HepG2 (cell line): ENCODE measurements at regions of chr2 and their contacts with region 1.

Region 1: DNA sequence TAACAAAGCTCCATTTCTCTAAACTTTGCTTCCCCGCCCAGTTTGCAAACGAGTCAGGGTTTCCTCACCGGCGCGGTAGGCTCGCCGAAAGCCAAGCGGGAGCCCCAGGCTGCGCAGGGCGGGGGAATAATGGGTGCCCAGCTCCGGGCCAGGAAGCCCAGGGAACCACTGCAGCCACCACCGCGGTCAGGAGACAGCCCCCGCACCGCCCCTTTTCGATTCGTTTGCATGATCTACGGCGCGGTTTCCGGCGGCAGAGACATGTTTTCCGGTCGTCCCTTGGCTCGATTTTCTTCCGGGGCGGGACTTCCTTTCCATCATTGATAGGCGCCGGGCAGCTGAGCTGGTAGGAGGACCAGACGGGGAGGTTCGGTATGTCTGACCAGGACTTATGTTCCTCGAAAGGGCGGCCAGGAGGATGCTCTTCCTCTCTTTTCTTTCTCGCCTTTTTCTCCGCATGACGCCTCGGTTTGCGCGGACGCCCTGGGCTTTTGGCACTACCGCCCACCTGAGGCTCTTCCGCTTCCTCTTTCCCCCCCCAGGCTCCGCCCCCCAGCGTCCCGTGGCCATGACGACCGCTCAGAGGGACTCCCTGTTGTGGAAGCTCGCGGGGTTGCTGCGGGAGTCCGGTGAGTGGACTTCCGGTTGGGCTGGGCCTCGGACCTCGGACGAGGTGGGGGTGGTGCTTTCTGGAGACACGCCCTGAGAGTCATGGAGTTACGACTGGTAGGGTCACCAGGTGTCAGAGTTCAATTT is at the start of gene STK11IP:
- DNase-seq: peak; percentile 99
- ATAC-seq: peak; percentile 96
- H3K4me3 ChIP-seq: peak within 1 kb of the TSS; percentile 72 to 91 (median 81)
- H3K27ac ChIP-seq: peak within 1 kb of the TSS; percentile 95
- H3K4me1 ChIP-seq: peaks cover 53% of the 10 kb centered on the region
- H3K27me3 ChIP-seq: no peaks in the 10 kb centered on the region; a peak in 1 of 5 replicates
- CTCF ChIP-seq: peak; percentile 27
- EP300 ChIP-seq: peak; percentile 16 to 61; a peak in 2 of 4 replicates
- POLR2A ChIP-seq: peak; percentile 89 to 96
- RAD21 ChIP-seq: peak; percentile 47; the same call in 1 of the 2 replicates
- total RNA-seq, gene STK11IP: 5.6 and 12.8 TPM in 2 replicates

Region 2: DNA sequence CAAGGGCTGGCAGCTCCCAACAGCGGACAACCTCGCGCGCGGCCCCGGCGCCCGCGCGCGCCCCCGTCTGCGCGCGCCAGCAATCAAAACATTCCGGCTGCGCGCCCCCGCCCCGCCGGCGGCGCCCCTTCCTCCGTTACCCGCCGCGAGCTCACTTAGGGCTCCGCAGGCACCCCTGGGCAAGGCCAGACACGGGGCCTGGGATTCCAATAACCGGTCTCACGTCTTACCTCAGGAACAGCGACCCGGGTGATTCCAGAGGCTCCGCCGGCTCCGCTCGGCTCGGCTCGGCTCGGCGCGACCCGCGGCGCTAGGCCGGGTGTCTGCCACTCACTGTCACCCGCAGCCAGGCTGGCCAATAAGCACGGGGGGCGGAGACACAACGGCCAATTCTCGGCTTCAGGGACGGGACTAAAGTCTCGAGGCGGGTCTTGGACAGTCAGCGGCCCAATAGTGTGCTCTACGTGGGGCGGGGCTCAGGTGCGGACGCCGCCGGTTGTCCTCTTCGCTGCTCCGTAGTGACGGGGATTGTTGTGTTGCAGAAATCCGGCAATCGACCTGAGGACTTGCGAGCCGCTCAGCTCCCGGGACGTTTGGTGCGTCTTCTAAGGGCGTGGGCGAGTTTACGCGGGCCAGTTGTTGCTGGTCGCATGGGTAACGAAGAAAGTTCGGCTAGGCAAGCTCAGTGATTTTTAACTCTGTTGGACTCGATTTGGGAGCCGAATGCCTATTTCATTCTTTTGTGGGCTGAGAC is 368.2 kb before region 1 on chr2 and contains the starts of genes ANKZF1 and ATG9A:
- CTCF ChIA-PET with region 1: no interaction called
- POLR2A ChIA-PET with region 1: no interaction called
- in situ Hi-C with region 1: no loop called
- intact Hi-C with region 1: no loop called
- DNase-seq: peak; percentile 99
- ATAC-seq: peak; percentile 94
- H3K4me3 ChIP-seq: peak within 1 kb of the TSS; percentile 91 to 93 (median 93)
- H3K27ac ChIP-seq: peak within 1 kb of the TSS; percentile 81
- H3K4me1 ChIP-seq: peaks cover 39% of the 10 kb centered on the region
- H3K27me3 ChIP-seq: no peaks in the 10 kb centered on the region; a peak in 1 of 5 replicates
- CTCF ChIP-seq: peak; percentile 9; the same call in 1 of the 2 replicates
- EP300 ChIP-seq: peak; percentile 20 to 21; a peak in 3 of 4 replicates
- POLR2A ChIP-seq: peak; percentile 85 to 92
- RAD21 ChIP-seq: peak; percentile 73
- total RNA-seq, gene ANKZF1: 14.6 and 25.3 TPM in 2 replicates
- total RNA-seq, gene ATG9A: 22.2 and 35.0 TPM in 2 replicates

Region 3: GRCh38 chr2:219498280-219499057 is 99.3 kb before region 1 on chr2 and contains the start of gene GMPPA:
- CTCF ChIA-PET with region 1: no interaction called
- POLR2A ChIA-PET with region 1: interaction called, 22 read pairs
- in situ Hi-C with region 1: no loop called
- intact Hi-C with region 1: loop called (anchors 5 kb)
- DNase-seq: peak; percentile 99
- ATAC-seq: peak; percentile 82
- H3K4me3 ChIP-seq: peak within 1 kb of the TSS; percentile 79 to 93 (median 89)
- H3K27ac ChIP-seq: peak within 1 kb of the TSS; percentile 70
- H3K4me1 ChIP-seq: peaks cover 56% of the 10 kb centered on the region
- H3K27me3 ChIP-seq: peaks cover 6 to 40% of the 10 kb centered on the region in 2 experiments; a peak in 4 of 5 replicates
- CTCF ChIP-seq: peak; percentile 36
- EP300 ChIP-seq: peak in 1 of 2 experiments; percentile 7; a peak in 2 of 4 replicates
- POLR2A ChIP-seq: peak in 1 of 2 experiments; percentile 84; a peak in 2 of 4 replicates
- RAD21 ChIP-seq: no peak
- total RNA-seq, gene GMPPA: 81.1 and 88.7 TPM in 2 replicates

Region 4: DNA sequence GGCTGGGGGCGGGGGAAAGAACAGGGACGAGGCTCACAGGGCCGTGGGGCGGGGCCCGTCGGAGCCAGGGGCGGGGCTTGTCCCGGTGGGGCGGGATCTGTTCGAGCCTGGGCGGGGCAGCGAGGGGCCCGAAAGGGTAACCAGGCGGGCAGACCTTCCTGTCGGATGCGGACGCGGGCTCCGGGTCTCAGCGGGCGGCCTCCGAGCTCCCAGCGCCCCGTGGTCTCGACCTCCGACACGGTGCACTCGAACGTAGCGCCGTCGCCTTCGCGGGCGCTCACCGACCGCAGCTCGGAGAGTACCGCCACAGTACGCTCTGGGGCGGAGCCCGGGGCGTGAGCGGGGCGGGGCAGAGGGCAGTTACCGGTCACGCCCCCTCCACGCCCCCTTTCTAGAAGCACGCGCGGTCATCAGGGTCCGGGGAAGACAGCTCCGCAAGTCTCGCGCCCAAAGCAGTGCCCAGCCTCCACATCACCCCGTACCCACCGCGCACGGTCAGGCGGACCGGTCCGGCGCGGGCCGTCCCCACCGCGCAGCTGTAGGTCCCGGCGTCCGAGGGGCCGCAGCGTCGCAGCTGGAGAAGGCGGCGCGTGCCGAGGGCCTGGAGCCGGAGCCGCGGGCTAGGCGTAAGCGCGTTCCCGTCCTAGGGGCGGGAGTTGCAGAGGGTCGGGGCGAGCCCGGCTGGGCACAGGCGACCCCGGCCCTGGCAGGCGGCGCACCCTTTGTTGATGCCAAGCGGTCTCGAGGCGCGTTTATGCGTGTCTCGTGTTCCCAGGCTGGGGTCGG is 45.2 kb before region 1 on chr2:
- CTCF ChIA-PET with region 1: no interaction called
- POLR2A ChIA-PET with region 1: interaction called, 22 read pairs
- in situ Hi-C with region 1: no loop called
- intact Hi-C with region 1: no loop called
- DNase-seq: peak; percentile 79
- ATAC-seq: peak; percentile 84
- H3K4me3 ChIP-seq: peak overlapping the region; percentile 71 to 79 (median 73)
- H3K27ac ChIP-seq: peak overlapping the region; percentile 51
- H3K4me1 ChIP-seq: peaks cover 22% of the 10 kb centered on the region
- H3K27me3 ChIP-seq: no peaks in the 10 kb centered on the region
- CTCF ChIP-seq: no peak; the same call in 1 of the 2 replicates
- EP300 ChIP-seq: no peak
- POLR2A ChIP-seq: no peak
- RAD21 ChIP-seq: peak; percentile 46

Region 5: DNA sequence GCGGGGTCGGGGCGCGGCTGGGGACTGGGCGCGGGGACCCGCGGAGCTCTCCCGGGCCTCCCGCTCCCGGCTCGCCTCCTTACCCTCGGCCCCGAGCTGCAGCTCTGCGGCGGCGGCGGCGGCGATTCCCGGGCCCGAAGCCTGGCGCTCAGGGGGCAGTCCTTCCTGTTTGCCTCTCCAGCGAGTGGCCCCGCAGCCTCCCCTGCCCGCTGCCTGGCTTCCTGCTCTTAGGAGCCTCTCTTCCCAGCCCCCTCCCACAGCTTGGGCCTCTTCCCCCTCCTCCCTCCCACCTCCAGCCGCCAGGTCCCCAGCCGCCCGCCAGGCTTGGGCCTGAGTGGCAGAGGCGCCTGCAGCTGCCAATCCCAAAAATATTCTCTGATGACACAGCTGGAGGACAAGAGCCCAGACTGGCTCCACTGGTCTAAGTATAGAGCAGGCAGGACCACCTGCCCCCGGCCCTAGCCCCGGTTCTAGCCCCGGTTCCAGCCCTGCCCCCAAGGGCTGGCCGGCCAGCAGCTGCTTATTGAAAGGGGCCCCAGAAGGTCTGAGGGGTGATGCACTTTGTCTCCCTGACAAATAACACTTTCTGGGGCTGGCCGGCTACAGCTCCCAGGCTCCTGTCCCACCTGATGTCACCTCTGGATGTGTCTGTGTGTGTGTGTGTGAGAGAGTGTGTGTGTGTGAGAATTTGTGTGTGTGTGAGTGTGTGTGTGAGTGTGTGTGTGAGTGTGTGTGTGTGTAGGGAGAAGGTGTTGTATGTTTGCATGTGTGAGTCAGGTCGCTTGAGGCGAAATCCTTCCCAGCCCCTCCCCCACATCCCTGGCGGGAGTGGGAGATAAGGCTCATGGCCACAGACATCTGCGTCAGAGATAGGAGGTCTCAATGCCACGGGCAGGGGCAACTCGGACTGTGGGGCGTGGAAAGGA is 26.2 kb before region 1 on chr2 and contains the start of gene OBSL1:
- CTCF ChIA-PET with region 1: no interaction called
- POLR2A ChIA-PET with region 1: interaction called, 150 read pairs
- in situ Hi-C with region 1: no loop called
- intact Hi-C with region 1: no loop called
- DNase-seq: peak; percentile 90
- ATAC-seq: peak; percentile 85
- H3K4me3 ChIP-seq: peak within 1 kb of the TSS; percentile 90 to 95 (median 94)
- H3K27ac ChIP-seq: peak within 1 kb of the TSS; percentile 94
- H3K4me1 ChIP-seq: peaks cover 66% of the 10 kb centered on the region
- H3K27me3 ChIP-seq: no peaks in the 10 kb centered on the region
- CTCF ChIP-seq: peak; percentile 30; the same call in 1 of the 2 replicates
- EP300 ChIP-seq: peak; percentile 17 to 69; a peak in 3 of 4 replicates
- POLR2A ChIP-seq: peak in 1 of 2 experiments; percentile 63; a peak in 1 of 4 replicates
- RAD21 ChIP-seq: no peak; the same call in 1 of the 2 replicates
- total RNA-seq, gene OBSL1: 65.4 and 86.7 TPM in 2 replicates

Region 6: DNA sequence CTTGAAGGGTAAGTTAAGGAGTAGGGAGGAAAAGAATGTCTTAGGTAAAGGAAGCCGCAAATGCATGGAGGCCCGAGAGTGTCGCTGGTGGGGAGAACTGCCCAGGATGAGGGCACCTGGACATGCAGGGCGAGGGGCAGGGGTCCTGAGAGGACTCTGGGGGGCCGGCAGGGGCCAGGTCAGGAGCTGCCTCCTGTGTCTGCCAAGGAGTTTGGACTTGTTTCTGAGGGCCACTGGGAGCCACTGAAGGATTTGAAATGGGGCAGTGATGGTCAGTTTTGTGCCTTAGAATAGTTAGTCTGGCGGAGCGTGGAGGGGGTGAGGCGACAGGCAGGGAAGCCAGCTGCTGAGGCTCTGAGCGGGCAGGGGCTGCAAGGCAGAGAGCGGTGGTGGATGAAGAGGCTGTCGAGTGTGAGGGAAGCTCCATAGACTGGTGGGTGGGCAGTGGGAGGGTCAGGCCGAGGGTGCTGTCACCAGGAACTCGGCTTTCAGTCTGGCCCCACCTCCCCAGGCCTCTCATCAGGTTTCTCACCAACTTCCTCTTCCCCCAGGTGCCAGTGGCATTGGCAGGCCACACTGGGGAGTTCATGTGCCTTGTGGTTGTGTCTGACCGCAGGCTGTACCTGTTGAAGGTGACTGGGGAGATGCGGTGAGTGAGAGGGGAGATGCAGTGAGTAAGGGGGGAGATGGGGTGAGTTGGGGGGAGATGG is 15.0 kb after region 1 on chr2:
- CTCF ChIA-PET with region 1: no interaction called
- POLR2A ChIA-PET with region 1: no interaction called
- in situ Hi-C with region 1: no loop called
- intact Hi-C with region 1: no loop called
- DNase-seq: no peak
- ATAC-seq: no peak
- H3K4me3 ChIP-seq: no peak overlapping the region
- H3K27ac ChIP-seq: no peak overlapping the region
- H3K4me1 ChIP-seq: no peaks in the 10 kb centered on the region
- H3K27me3 ChIP-seq: no peaks in the 10 kb centered on the region
- CTCF ChIP-seq: no peak
- EP300 ChIP-seq: no peak
- POLR2A ChIP-seq: no peak
- RAD21 ChIP-seq: no peak

Region 7: GRCh38 chr2:219627103-219628100 is 29.7 kb after region 1 on chr2 and contains the start of gene SLC4A3:
- CTCF ChIA-PET with region 1: no interaction called
- POLR2A ChIA-PET with region 1: no interaction called
- in situ Hi-C with region 1: no loop called
- intact Hi-C with region 1: loop called (anchors 2 kb)
- DNase-seq: no peak
- ATAC-seq: peak; percentile 63
- H3K4me3 ChIP-seq: peak within 1 kb of the TSS; percentile 52 to 72 (median 65); a peak in 5 of 6 replicates
- H3K27ac ChIP-seq: no peak within 1 kb of the TSS
- H3K4me1 ChIP-seq: peaks cover 44% of the 10 kb centered on the region
- H3K27me3 ChIP-seq: peaks cover 26 to 87% of the 10 kb centered on the region in 2 experiments
- CTCF ChIP-seq: peak; percentile 46; the same call in 1 of the 2 replicates
- EP300 ChIP-seq: no peak
- POLR2A ChIP-seq: no peak
- RAD21 ChIP-seq: no peak
- total RNA-seq, gene SLC4A3: 0.10 and 0.18 TPM in 2 replicates